Cardiac septum (tissue), 1 donor: ENCODE measurements at regions of chr4 and their contacts with region 1.

Region 1: DNA sequence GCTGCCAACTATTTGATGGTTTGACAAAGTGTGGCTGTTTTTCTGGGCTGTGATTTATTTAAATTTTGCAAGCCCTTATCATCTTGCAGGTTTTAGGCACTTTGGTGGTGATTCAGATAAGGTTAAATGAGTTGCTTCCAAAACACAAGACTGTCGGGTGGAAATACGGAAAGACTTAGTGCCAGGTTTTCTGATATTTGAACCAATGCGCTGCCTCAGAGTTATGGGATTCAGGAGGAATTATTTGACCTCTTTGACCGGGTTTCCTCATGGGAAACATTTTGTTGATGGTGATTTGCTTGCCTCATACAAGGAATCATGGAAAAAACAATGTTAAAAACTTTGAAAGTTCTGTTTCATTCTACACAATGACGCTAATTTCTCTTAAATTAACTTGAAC is 136.1 kb upstream of the MAP9 start:
- DNase-seq: no peak

Region 2: GRCh38 chr4:155442267-155443105 is 70.3 kb before region 1 on chr4:
- intact Hi-C with region 1: loop called (anchors 5 kb)
- DNase-seq: peak; percentile 88

Region 3: GRCh38 chr4:155660436-155660835 is 147.6 kb after region 1 on chr4:
- intact Hi-C with region 1: no loop called
- DNase-seq: no peak